Kidney (tissue), 22 donors: ENCODE measurements at regions of chr12 and their contacts with region 1.

Region 1: GRCh38 chr12:96061864-96062453 is 26.6 kb upstream of the LTA4H start:
- DNase-seq: peak in 4 of 5 donors; percentile 64 to 89 (median 76)
- H3K4me3 ChIP-seq: no peak overlapping the region
- H3K27ac ChIP-seq: no peak overlapping the region
- H3K4me1 ChIP-seq: no peaks in the 10 kb centered on the region
- H3K27me3 ChIP-seq: no peaks in the 10 kb centered on the region
- CTCF ChIP-seq: peak; percentile 83

Region 2: GRCh38 chr12:96219698-96220206 is 157.8 kb after region 1 on chr12:
- intact Hi-C with region 1: loop called (anchors 10 kb)
- DNase-seq: no peak
- H3K4me3 ChIP-seq: no peak overlapping the region
- H3K27ac ChIP-seq: no peak overlapping the region
- H3K4me1 ChIP-seq: peaks cover 0 to 2% (median 0%) of the 10 kb centered on the region in 3 donors
- H3K27me3 ChIP-seq: no peaks in the 10 kb centered on the region
- CTCF ChIP-seq: no peak